Transverse colon (tissue), 4 donors: ENCODE measurements at regions of chr19 and their contacts with region 1.

Region 1: GRCh38 chr19:49983645-49984229 is 22.8 kb upstream of the SIGLEC11 start:
- DNase-seq: peak; percentile 68
- H3K4me3 ChIP-seq: no peak overlapping the region
- H3K27ac ChIP-seq: no peak overlapping the region
- H3K4me1 ChIP-seq: no peaks in the 10 kb centered on the region
- H3K27me3 ChIP-seq: no peaks in the 10 kb centered on the region
- CTCF ChIP-seq: peak; percentile 84 to 90 (median 90)
- EP300 ChIP-seq: no peak
- POLR2A ChIP-seq: no peak

Region 2: DNA sequence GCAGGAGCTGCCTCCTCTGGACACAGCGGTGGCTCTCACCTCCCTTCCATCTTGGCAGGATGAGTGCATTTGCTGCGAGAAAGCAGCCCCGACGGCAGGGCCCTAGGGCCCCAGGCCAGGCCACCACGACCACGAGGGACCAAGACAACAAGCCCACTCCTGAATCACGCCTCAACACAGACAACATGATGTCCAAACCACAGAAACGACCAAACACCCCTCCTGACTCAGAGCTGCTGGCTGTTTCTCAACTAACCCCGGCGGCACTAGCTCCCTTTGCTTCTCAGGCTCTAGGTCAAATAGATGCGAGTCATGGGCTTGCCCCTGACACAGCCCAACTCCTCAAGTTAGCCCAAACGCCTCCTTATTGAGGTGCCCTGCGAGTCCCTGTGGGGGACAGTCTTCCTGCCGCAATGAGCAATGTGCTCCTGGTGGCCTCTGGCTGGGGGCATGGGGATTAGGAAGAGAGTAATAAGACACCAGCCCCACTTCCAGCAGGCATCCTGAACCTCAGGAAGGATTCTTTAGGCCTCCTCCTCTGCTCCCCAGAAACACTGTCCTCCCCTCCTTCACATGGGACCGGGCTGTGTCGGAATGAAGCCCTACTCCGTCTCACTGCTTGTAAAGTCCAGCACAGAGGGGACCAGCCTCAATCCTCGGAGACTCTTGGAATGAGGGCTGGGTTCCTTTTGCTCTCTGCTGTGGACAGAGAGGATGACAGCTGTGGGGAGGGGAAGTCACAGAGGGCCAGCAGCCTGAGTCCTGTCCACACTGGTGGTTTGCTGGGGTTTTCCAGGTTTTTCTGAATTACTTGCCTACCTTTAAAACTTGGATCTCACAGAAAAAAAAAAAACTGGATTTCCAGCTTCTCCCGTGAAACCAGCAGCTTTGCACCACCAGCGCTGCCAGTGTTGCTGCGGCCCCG is 61.6 kb before region 1 on chr19:
- in situ Hi-C with region 1: no loop called
- intact Hi-C with region 1: no loop called
- DNase-seq: no peak
- H3K4me3 ChIP-seq: no peak overlapping the region
- H3K27ac ChIP-seq: no peak overlapping the region
- H3K4me1 ChIP-seq: peaks cover 0 to 3% (median under 1%) of the 10 kb centered on the region in 4 donors
- H3K27me3 ChIP-seq: no peaks in the 10 kb centered on the region
- CTCF ChIP-seq: no peak
- EP300 ChIP-seq: no peak
- POLR2A ChIP-seq: no peak

Region 3: DNA sequence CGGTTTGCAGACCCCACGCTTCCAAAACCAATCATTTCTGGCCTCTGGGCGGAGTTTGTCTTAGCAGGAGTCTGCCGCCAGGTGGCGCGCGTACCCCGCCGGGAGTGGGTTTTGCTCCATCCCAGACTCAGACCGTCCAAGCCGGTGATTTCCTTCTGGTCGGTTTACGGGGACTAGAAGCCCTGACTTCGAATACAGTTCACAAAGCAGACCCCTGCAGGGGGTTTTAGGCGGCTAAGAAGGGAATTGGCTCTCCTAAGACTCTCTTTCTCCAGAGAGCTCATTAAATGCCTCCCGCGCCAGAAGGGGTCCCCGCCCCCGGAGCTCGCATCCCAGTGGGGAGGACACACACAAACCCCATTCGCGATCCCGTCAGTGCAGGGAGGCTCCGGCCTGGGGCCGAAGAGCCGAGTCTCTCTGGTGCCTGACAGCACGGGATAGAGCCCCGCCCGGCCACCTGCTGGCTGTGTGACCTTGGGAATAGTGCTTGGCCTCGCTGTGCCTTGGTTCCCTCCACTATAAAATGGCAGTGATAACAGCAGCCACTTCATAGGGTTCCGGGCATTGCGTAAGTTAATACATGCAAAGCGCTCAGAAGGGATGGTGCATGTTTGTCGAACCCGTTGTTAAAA is 45.9 kb before region 1 on chr19:
- in situ Hi-C with region 1: loop called in 3 of 4 experiments (anchors 5 to 10 kb)
- intact Hi-C with region 1: loop called (anchors 5 kb)
- DNase-seq: peak; percentile 80
- H3K4me3 ChIP-seq: peak overlapping the region in 1 of 4 donors; percentile 33
- H3K27ac ChIP-seq: no peak overlapping the region
- H3K4me1 ChIP-seq: peaks cover 2 to 8% (median 5%) of the 10 kb centered on the region in 4 donors
- H3K27me3 ChIP-seq: no peaks in the 10 kb centered on the region
- CTCF ChIP-seq: peak; percentile 94 to 98 (median 96)
- EP300 ChIP-seq: no peak
- POLR2A ChIP-seq: no peak